ENCODE measurements at regions of chr19 and their contacts with region 1.

Region 1: GRCh38 chr19:23983357-23983756 is 68.7 kb downstream of the ZNF726 start:
- DNase-seq: peak in 1 of 2 experiments; percentile 83
- H3K4me3 ChIP-seq: no peak overlapping the region
- H3K27ac ChIP-seq: no peak overlapping the region
- H3K4me1 ChIP-seq: no peaks in the 10 kb centered on the region
- H3K27me3 ChIP-seq: no peaks in the 10 kb centered on the region
- CTCF ChIP-seq: no peak

Region 2: DNA sequence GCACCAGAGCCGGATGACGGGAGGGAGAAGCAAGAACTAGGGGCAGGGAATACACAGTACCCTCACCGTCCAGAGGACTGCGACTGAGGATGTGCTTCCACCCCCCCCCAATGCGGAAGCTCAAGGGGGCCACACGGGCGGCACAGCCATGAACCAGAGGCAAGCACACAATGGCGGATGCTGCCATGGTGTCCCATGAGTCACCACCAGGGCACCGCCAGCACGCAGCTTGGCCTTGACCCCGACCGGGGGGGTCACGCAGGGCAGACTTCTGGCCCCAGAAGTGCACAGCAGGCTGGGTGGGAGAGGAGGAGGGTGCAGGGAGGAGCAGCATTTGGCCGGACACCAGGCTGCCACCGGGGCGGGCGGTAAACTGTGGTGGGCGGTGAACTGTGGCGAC is 20.2 kb after region 1 on chr19:
- CTCF ChIA-PET with region 1: no interaction called
- POLR2A ChIA-PET with region 1: interaction called, 18 read pairs
- intact Hi-C with region 1: no loop called
- DNase-seq: no peak
- H3K4me3 ChIP-seq: no peak overlapping the region
- H3K27ac ChIP-seq: no peak overlapping the region
- H3K4me1 ChIP-seq: peaks cover 20% of the 10 kb centered on the region
- H3K27me3 ChIP-seq: no peaks in the 10 kb centered on the region
- CTCF ChIP-seq: no peak